ENCODE measurements at regions of chr7 and their contacts with region 1.

Region 1: DNA sequence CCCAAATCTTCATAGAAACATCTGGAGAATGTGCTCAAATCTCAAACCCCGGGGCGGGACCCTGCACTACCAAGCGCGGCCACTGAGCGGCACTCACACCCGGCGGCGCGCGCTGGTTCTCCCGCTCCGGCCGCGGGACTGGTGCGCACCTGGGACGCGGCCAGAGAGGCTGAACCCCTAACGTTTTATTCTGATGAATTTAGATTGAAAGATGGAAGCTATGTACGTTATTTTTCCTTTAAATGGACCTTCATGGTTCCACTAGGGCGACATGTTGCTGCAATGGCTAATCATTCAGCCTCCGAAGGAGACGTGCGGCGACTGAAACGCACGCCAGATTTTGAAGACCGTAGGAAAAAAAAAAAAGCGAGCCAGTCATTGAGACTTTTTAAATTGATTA is 107.0 kb upstream of the INSIG1 start:
- DNase-seq: no peak
- ATAC-seq: peak; percentile 80
- H3K4me3 ChIP-seq: no peak overlapping the region
- H3K27ac ChIP-seq: no peak overlapping the region
- H3K4me1 ChIP-seq: peaks cover 7% of the 10 kb centered on the region; the same call in 1 of the 2 replicates
- H3K27me3 ChIP-seq: no peaks in the 10 kb centered on the region
- CTCF ChIP-seq: peak; percentile 76 to 91 (median 82)
- EP300 ChIP-seq: no peak
- POLR2A ChIP-seq: no peak
- RAD21 ChIP-seq: peak; percentile 93

Region 2: GRCh38 chr7:155153676-155154075 is 37.0 kb before region 1 on chr7:
- CTCF ChIA-PET with region 1: no interaction called
- POLR2A ChIA-PET with region 1: no interaction called
- RAD21 ChIA-PET with region 1: no interaction called
- SMC1A ChIA-PET with region 1: no interaction called
- in situ Hi-C with region 1: no loop called
- intact Hi-C with region 1: no loop called
- DNase-seq: no peak
- ATAC-seq: no peak
- H3K4me3 ChIP-seq: no peak overlapping the region
- H3K27ac ChIP-seq: no peak overlapping the region
- H3K4me1 ChIP-seq: no peaks in the 10 kb centered on the region
- H3K27me3 ChIP-seq: no peaks in the 10 kb centered on the region
- CTCF ChIP-seq: no peak
- EP300 ChIP-seq: no peak
- POLR2A ChIP-seq: no peak
- RAD21 ChIP-seq: no peak

Region 3: GRCh38 chr7:155216293-155217272 is 25.9 kb after region 1 on chr7:
- CTCF ChIA-PET with region 1: interaction called, 10 read pairs
- POLR2A ChIA-PET with region 1: interaction called, 3 read pairs
- RAD21 ChIA-PET with region 1: interaction called, 4 read pairs
- SMC1A ChIA-PET with region 1: no interaction called
- in situ Hi-C with region 1: no loop called
- intact Hi-C with region 1: loop called (anchors 1 kb)
- DNase-seq: no peak
- ATAC-seq: peak; percentile 72
- H3K4me3 ChIP-seq: no peak overlapping the region
- H3K27ac ChIP-seq: no peak overlapping the region
- H3K4me1 ChIP-seq: no peaks in the 10 kb centered on the region; the same call in 1 of the 2 replicates
- H3K27me3 ChIP-seq: no peaks in the 10 kb centered on the region
- CTCF ChIP-seq: peak; percentile 25 to 44 (median 37); a peak in 5 of 6 replicates
- EP300 ChIP-seq: no peak
- POLR2A ChIP-seq: no peak
- RAD21 ChIP-seq: peak; percentile 40; the same call in 1 of the 2 replicates

Region 4: GRCh38 chr7:155344600-155345433 is 154.1 kb after region 1 on chr7:
- CTCF ChIA-PET with region 1: interaction called, 37 read pairs
- POLR2A ChIA-PET with region 1: no interaction called
- RAD21 ChIA-PET with region 1: interaction called, 12 read pairs
- SMC1A ChIA-PET with region 1: interaction called, 18 read pairs
- in situ Hi-C with region 1: loop called (anchors 5 kb)
- intact Hi-C with region 1: loop called (anchors 1 kb)
- DNase-seq: no peak
- ATAC-seq: peak; percentile 98
- H3K4me3 ChIP-seq: peak overlapping the region; percentile 63; the same call in 1 of the 2 replicates
- H3K27ac ChIP-seq: no peak overlapping the region
- H3K4me1 ChIP-seq: peaks cover 5% of the 10 kb centered on the region; the same call in 1 of the 2 replicates
- H3K27me3 ChIP-seq: no peaks in the 10 kb centered on the region
- CTCF ChIP-seq: peak; percentile 71 to 73 (median 72); a peak in 5 of 6 replicates
- EP300 ChIP-seq: no peak
- POLR2A ChIP-seq: peak; percentile 29; the same call in 1 of the 2 replicates
- RAD21 ChIP-seq: peak; percentile 90

Measured in GM12878 (cell line).